ENCODE measurements at regions of chr17 and their contacts with region 1.

Region 1: DNA sequence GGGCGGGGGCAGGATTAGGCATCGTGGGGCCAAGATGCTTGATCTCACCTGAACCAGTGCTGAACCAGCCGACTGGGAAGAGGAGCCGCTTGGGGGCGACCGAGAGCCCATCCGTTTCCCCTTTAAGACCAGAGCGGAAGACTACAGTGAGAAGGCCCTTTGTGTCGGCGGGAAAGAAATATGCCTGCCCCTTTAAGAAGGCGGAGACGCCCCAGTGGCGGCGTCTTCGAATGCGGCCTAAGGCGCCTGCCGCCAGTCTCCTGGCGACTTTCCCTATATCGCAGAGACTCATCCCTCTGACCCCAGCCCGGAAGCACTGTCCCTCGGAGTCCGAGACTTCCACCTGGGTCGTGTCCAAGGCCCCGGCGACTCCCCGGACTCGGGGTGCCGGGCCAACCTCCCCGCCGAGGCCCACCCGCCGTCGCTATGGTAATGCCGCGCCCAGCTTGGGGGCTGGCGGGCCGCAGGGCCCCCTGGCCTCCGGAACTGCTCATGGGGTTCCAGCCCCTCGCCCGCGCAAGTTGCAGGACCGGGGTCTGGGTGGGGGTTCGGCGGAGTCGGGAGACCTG is at the start of gene HROB:
- DNase-seq: peak; percentile 96
- ATAC-seq: peak; percentile 90
- total RNA-seq, gene HROB: 0.59 TPM

Region 2: DNA sequence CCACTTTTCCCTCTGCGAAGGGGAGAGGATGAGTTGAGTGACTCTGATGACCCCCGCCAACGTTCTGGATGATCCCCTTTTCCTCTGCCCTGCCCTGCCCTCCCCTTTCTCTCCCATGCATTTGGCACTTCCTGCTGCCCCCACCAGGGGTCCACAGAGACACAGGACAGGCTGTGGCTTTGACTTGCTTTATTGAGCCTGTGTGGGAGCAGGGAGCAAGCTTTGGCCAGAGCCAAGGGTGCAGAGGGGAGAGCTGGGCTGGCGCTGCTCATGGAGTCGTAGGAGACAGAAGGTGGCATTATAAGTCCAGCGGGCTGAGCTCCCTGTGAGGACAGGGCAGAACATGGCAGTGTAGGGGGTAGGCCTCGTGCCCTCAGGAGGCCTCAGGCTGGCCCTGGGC is 201.2 kb before region 1 on chr17:
- intact Hi-C with region 1: loop called (anchors 10 kb)
- DNase-seq: no peak
- ATAC-seq: peak; percentile 32

Region 3: DNA sequence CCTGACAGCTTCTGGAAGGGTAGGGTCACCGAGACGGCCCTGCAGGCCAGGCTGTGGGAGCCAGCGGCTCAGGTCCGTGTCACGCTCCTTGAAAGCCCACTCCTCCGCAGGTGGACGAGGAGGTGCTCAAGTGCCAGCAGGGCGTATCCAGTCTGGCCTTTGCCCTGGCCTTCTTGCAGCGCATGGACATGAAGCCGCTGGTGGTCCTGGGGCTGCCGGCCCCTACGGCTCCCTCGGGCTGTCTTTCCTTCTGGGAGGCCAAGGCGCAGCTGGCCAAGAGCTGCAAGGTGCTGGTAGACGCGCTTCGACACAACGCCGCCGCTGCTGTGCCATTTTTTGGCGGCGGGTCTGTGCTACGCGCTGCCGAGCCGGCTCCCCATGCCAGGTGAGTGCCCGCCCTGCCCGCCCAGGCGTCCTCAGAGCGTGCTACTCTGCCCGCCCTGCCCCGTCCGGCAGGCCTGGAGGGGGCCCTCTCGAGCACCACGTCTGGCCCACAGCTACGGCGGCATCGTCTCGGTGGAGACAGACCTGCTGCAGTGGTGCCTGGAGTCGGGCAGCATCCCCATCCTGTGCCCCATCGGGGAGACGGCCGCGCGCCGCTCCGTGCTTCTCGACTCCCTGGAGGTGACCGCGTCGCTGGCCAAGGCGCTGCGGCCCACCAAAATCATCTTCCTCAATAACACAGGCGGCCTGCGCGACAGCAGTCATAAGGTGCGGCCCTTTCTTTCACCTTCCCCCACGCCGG is 136.1 kb before region 1 on chr17:
- intact Hi-C with region 1: no loop called
- DNase-seq: peak; percentile 50
- ATAC-seq: peak; percentile 18

Region 4: GRCh38 chr17:44344939-44345453 is 203.2 kb after region 1 on chr17 and contains the start of gene GRN:
- intact Hi-C with region 1: loop called (anchors 10 kb)
- DNase-seq: peak; percentile 94
- ATAC-seq: peak; percentile 98
- total RNA-seq, gene GRN: 135 TPM